H1 (cell line): ENCODE measurements at regions of chr16 and their contacts with region 1.

Region 1: DNA sequence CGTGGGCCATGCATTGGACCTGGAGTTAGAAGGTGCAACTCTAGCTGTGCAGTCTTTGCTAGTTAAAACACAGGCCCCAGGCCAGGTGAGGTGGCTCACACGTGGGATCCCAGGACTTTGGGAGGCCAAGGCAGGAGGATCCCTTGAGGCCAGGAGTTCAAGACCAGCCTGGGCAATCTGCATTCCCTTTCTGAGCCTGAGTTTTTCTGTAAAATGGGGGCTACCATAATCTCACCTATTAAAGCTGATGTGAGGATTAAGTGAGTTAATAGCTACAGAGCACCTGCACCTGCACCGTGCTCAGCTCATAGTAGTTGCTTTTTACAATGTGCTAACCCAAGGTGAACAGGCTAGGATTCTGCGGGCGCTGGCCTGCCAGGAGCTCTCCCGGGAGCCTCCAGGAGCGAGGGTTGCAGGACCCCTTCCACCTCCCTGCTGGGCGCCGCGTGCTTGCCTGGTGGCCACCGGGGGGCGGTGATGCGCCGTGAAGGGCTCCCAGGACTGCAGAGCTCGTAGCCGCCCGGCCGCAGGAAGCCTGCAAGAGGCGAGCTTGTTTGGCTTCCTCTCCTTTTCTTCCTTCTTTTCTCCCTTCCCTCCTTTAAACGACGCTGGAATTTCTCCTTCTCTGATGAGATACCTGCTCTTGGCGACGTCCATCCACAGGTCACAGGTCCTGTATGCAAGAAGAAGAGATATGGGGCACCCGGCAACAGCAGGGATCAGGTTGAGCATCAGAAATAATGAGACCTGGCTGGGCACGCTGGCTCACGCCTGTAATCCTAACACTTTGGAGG is 51.3 kb downstream of the ZFP90 start:
- DNase-seq: peak; percentile 64 to 97
- H3K4me3 ChIP-seq: no peak overlapping the region
- H3K27ac ChIP-seq: no peak overlapping the region
- H3K4me1 ChIP-seq: 0 out of 7 replicates have a peak, but pooled peaks cover 0 to 3% (median 0%) of the 10 kb centered on the region in 4 experiments
- H3K27me3 ChIP-seq: no peaks in the 10 kb centered on the region
- CTCF ChIP-seq: peak; percentile 83 to 89 (median 86)
- EP300 ChIP-seq: no peak
- POLR2A ChIP-seq: no peak
- RAD21 ChIP-seq: peak; percentile 94 to 96

Region 2: DNA sequence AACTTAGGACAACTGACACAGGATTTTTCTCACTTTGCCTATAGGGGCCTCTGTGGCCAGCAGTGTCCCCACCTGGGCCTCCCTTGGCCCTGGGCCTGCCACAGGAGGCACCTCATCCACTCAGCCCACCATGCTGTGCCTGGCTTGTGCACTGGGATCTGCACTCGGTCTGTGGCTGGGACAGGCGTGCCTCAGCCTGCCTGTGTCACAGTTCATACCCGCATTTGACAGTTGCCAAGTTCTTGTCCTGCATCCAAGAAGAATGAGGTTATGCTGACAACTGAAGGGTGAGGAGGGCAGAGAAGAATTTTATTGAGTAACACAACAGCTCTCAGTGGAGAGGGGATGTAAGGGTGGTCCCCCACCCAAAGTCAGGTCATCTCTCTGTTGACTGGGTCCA is 15.3 kb before region 1 on chr16:
- CTCF ChIA-PET with region 1: interaction called, 12 read pairs
- POLR2A ChIA-PET with region 1: no interaction called
- DNase-seq: no peak
- H3K4me3 ChIP-seq: no peak overlapping the region
- H3K27ac ChIP-seq: no peak overlapping the region
- H3K4me1 ChIP-seq: no peaks in the 10 kb centered on the region
- H3K27me3 ChIP-seq: no peaks in the 10 kb centered on the region
- CTCF ChIP-seq: no peak
- EP300 ChIP-seq: no peak
- POLR2A ChIP-seq: no peak
- RAD21 ChIP-seq: no peak

Region 3: GRCh38 chr16:68617734-68618133 is 27.3 kb after region 1 on chr16:
- CTCF ChIA-PET with region 1: no interaction called
- POLR2A ChIA-PET with region 1: no interaction called
- DNase-seq: no peak
- H3K4me3 ChIP-seq: no peak overlapping the region
- H3K27ac ChIP-seq: no peak overlapping the region; the same call in 1 of the 2 replicates
- H3K4me1 ChIP-seq: no peaks in the 10 kb centered on the region
- H3K27me3 ChIP-seq: no peaks in the 10 kb centered on the region
- CTCF ChIP-seq: no peak
- EP300 ChIP-seq: no peak
- POLR2A ChIP-seq: no peak
- RAD21 ChIP-seq: no peak

Region 4: GRCh38 chr16:68636064-68636560 is 45.7 kb after region 1 on chr16:
- CTCF ChIA-PET with region 1: interaction called, 23 read pairs
- POLR2A ChIA-PET with region 1: interaction called, 4 read pairs
- DNase-seq: no peak
- H3K4me3 ChIP-seq: no peak overlapping the region
- H3K27ac ChIP-seq: no peak overlapping the region
- H3K4me1 ChIP-seq: no peaks in the 10 kb centered on the region
- H3K27me3 ChIP-seq: no peaks in the 10 kb centered on the region; a peak in 2 of 7 replicates
- CTCF ChIP-seq: no peak
- EP300 ChIP-seq: no peak
- POLR2A ChIP-seq: no peak
- RAD21 ChIP-seq: no peak

Region 5: GRCh38 chr16:68668266-68668665 is 77.9 kb after region 1 on chr16:
- CTCF ChIA-PET with region 1: interaction called, 32 read pairs
- POLR2A ChIA-PET with region 1: interaction called, 3 read pairs
- DNase-seq: no peak
- H3K4me3 ChIP-seq: no peak overlapping the region
- H3K27ac ChIP-seq: no peak overlapping the region
- H3K4me1 ChIP-seq: no peaks in the 10 kb centered on the region
- H3K27me3 ChIP-seq: no peaks in the 10 kb centered on the region
- CTCF ChIP-seq: no peak
- EP300 ChIP-seq: no peak
- POLR2A ChIP-seq: no peak
- RAD21 ChIP-seq: no peak

Region 6: GRCh38 chr16:68704232-68704867 is 114.0 kb after region 1 on chr16:
- CTCF ChIA-PET with region 1: interaction called, 11 read pairs
- POLR2A ChIA-PET with region 1: interaction called, 4 read pairs
- DNase-seq: peak; percentile 84 to 92
- H3K4me3 ChIP-seq: no peak overlapping the region
- H3K27ac ChIP-seq: no peak overlapping the region
- H3K4me1 ChIP-seq: peaks cover 0 to 10% (median 3%) of the 10 kb centered on the region in 4 experiments; a peak in 4 of 7 replicates
- H3K27me3 ChIP-seq: no peaks in the 10 kb centered on the region
- CTCF ChIP-seq: peak; percentile 87 to 96 (median 96)
- EP300 ChIP-seq: peak in 1 of 2 experiments; percentile 20; a peak in 2 of 3 replicates
- POLR2A ChIP-seq: no peak
- RAD21 ChIP-seq: peak; percentile 98